Activated T-helper 1 cell treated with anti-CD3 and anti-CD28 coated beads, Interleukin-12 subunit alpha, Interleukin-12 subunit beta, Interleukin-2, Interleukin-4 antibody, amounts not matched to agents 30 ng/mL and 10 ng/mL and 1 ng/mL, durations not matched to agents 14 hours and 24 hours and 36 hours (primary cell): ENCODE measurements at regions of chr7 and their contacts with region 1.

Region 1: GRCh38 chr7:47291461-47292081 is 290.3 kb downstream of the TNS3 start:
- DNase-seq: peak; percentile 5
- H3K4me3 Mint-ChIP-seq: peak overlapping the region; percentile 15
- H3K27ac Mint-ChIP-seq: peak overlapping the region; percentile 82
- H3K4me1 Mint-ChIP-seq: peaks cover 19% of the 10 kb centered on the region
- H3K27me3 Mint-ChIP-seq: no peaks in the 10 kb centered on the region

Region 2: DNA sequence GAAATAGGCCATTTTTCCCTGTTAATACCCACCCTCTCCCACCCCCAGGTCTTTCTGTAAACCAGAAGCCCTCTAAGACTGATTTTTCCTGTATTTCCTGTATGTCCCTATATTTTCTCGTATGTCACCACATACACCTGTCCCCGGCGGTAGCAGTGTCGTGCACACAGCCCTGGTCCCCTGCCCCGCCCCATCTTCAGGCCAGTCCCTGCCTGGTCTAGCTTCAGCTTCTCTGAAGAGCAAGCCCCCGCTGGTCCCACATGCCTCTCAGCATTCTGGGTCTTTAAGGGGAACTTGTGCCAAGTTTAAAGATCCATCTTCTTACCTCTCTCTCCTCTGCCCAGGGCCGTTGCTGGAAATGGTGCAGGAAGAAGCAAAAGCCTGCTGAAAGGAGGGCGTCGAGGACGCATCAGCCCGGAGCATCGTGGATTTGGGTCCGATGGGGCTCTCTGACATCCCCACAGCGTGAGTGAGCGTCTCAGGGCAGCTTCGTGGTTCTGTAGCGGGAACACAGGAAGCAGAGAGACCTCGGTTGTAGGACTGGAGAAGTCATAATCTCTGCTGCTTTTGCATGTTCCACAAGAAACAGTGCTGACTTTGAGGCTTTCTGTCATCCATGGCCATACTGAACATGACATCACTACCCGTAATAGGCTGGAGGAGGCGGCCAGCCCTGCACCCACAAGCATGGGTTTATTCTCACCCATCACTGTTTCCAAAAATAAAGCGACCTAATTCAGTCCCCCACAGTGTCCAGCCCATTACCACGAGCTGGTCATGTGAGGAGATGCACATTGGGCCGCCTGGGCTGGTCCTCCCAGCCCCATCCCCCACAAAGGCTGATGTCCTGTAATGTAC is 13.2 kb after region 1 on chr7:
- intact Hi-C with region 1: loop called (anchors 2 kb)
- DNase-seq: no peak
- H3K4me3 Mint-ChIP-seq: no peak overlapping the region
- H3K27ac Mint-ChIP-seq: no peak overlapping the region
- H3K4me1 Mint-ChIP-seq: no peaks in the 10 kb centered on the region
- H3K27me3 Mint-ChIP-seq: no peaks in the 10 kb centered on the region

Region 3: GRCh38 chr7:47354831-47355541 is 63.4 kb after region 1 on chr7:
- intact Hi-C with region 1: no loop called
- DNase-seq: no peak
- H3K4me3 Mint-ChIP-seq: no peak overlapping the region
- H3K27ac Mint-ChIP-seq: no peak overlapping the region
- H3K4me1 Mint-ChIP-seq: no peaks in the 10 kb centered on the region
- H3K27me3 Mint-ChIP-seq: no peaks in the 10 kb centered on the region

Region 4: GRCh38 chr7:47482013-47482875 is 190.7 kb after region 1 on chr7:
- intact Hi-C with region 1: loop called (anchors 2 kb)
- DNase-seq: no peak
- H3K4me3 Mint-ChIP-seq: peak overlapping the region; percentile 10
- H3K27ac Mint-ChIP-seq: peak overlapping the region; percentile 67
- H3K4me1 Mint-ChIP-seq: peaks cover 22% of the 10 kb centered on the region
- H3K27me3 Mint-ChIP-seq: no peaks in the 10 kb centered on the region